HCT116 (cell line): ENCODE measurements at regions of chr3 and their contacts with region 1.

Region 1: GRCh38 chr3:40179016-40179415 is 130.5 kb upstream of the EIF1B start:
- DNase-seq: peak; percentile 54
- ATAC-seq: peak; percentile 86
- H3K4me3 ChIP-seq: no peak overlapping the region
- H3K27ac ChIP-seq: no peak overlapping the region
- H3K4me1 ChIP-seq: no peaks in the 10 kb centered on the region
- H3K27me3 ChIP-seq: no peaks in the 10 kb centered on the region; the same call in 1 of the 2 replicates
- CTCF ChIP-seq: peak; percentile 57 to 76 (median 73); a peak in 5 of 6 replicates
- POLR2A ChIP-seq: no peak
- RAD21 ChIP-seq: peak; percentile 82

Region 2: DNA sequence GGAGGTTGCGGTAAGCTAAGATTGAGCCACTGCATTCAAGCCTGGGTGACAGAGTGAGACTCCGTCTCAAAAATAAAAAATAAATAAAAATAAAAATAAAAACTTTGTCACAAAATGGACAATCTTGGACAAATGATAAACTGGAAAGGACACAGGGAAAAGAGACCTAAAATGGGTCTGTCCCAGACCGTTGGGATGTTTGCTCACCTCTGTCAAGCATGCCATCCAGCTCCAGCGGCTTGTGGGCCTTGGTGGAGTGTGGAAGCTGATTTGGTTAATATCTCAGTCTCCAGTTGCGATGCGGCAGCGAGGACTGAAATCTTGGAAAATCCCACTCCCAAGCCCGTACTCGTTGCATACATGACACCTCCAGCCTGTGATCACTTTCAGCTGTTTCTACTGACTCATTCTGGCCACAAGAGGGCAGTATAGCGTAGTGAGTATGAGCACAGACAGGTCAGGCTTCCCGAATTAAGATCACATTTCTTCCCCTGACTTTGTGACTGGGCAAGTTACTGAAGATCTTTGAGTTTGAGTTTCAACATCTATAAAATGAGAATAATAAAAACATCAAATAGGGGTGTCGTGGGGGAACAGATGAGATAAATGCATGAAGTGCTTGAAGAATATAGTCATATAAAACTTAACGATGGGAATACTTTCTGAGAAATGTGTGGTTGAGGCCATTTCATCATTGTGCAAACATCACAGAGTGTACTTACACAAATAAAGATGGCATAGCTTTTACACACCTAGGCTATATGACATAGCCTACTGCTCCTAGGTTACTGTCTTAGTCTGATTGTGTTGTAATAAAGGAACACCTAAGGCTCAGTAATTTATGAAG is 731.2 kb before region 1 on chr3:
- CTCF ChIA-PET with region 1: no interaction called
- POLR2A ChIA-PET with region 1: no interaction called
- RAD21 ChIA-PET with region 1: no interaction called
- intact Hi-C with region 1: loop called (anchors 5 kb)
- DNase-seq: peak; percentile 81
- ATAC-seq: peak; percentile 98
- H3K4me3 ChIP-seq: no peak overlapping the region
- H3K27ac ChIP-seq: no peak overlapping the region
- H3K4me1 ChIP-seq: 0 out of 4 replicates have a peak, but pooled peaks cover 0 to 2% of the 10 kb centered on the region in 2 experiments
- H3K27me3 ChIP-seq: no peaks in the 10 kb centered on the region
- CTCF ChIP-seq: peak; percentile 80 to 91 (median 86)
- POLR2A ChIP-seq: no peak
- RAD21 ChIP-seq: peak; percentile 83

Region 3: GRCh38 chr3:39541917-39542329 is 637.1 kb before region 1 on chr3:
- CTCF ChIA-PET with region 1: interaction called, 9 read pairs
- POLR2A ChIA-PET with region 1: no interaction called
- RAD21 ChIA-PET with region 1: no interaction called
- intact Hi-C with region 1: loop called (anchors 2 kb)
- DNase-seq: peak; percentile 13
- ATAC-seq: peak; percentile 66
- H3K4me3 ChIP-seq: no peak overlapping the region
- H3K27ac ChIP-seq: no peak overlapping the region
- H3K4me1 ChIP-seq: no peaks in the 10 kb centered on the region
- H3K27me3 ChIP-seq: no peaks in the 10 kb centered on the region
- CTCF ChIP-seq: peak; percentile 55 to 71 (median 62); a peak in 4 of 6 replicates
- POLR2A ChIP-seq: no peak
- RAD21 ChIP-seq: peak; percentile 78

Region 4: GRCh38 chr3:39668420-39668819 is 510.6 kb before region 1 on chr3:
- CTCF ChIA-PET with region 1: no interaction called
- POLR2A ChIA-PET with region 1: no interaction called
- RAD21 ChIA-PET with region 1: no interaction called
- intact Hi-C with region 1: loop called (anchors 2 kb)
- DNase-seq: peak; percentile 47
- ATAC-seq: peak; percentile 93
- H3K4me3 ChIP-seq: no peak overlapping the region
- H3K27ac ChIP-seq: no peak overlapping the region
- H3K4me1 ChIP-seq: no peaks in the 10 kb centered on the region
- H3K27me3 ChIP-seq: peaks cover 19% of the 10 kb centered on the region; the same call in 1 of the 2 replicates
- CTCF ChIP-seq: peak; percentile 44 to 80 (median 76); a peak in 5 of 6 replicates
- POLR2A ChIP-seq: no peak
- RAD21 ChIP-seq: peak; percentile 55

Region 5: DNA sequence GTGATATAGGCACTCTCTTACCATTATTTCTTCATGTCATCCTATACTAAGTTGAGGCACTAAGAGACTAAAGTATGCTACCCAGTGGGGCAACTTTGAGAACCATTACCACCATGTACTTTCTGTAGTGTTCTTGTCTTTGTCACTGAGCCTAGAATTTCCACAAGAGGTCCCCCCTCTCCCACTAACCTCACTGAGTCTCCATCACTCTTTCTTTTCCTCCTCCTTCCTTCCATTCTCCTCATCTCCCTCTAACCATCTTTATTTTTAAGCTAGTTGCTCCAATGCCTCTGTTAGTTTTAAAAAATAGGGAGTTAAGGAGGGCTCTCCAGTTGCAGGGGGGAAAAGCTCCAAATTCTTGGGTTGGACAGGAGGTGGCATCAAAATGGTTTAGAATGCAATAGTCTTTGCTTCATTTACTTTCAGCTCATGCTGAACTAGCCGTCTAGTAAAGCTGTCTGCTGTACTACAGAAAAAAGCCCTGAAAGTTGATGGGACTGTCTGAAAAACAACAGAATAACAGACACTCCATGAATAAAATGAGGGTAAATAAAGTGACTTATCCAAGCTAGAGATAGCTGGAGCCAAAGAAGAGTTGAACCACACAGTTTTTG is 454.7 kb before region 1 on chr3:
- CTCF ChIA-PET with region 1: interaction called, 5 read pairs
- POLR2A ChIA-PET with region 1: no interaction called
- RAD21 ChIA-PET with region 1: no interaction called
- intact Hi-C with region 1: loop called (anchors 1 kb)
- DNase-seq: no peak
- ATAC-seq: no peak
- H3K4me3 ChIP-seq: no peak overlapping the region
- H3K27ac ChIP-seq: no peak overlapping the region
- H3K4me1 ChIP-seq: no peaks in the 10 kb centered on the region
- H3K27me3 ChIP-seq: no peaks in the 10 kb centered on the region; the same call in 1 of the 2 replicates
- CTCF ChIP-seq: peak in 2 of 3 experiments; percentile 15 to 18; a peak in 1 of 6 replicates
- POLR2A ChIP-seq: no peak
- RAD21 ChIP-seq: peak; percentile 36; the same call in 1 of the 2 replicates

Region 6: GRCh38 chr3:39812537-39812936 is 366.5 kb before region 1 on chr3:
- CTCF ChIA-PET with region 1: interaction called, 15 read pairs
- POLR2A ChIA-PET with region 1: no interaction called
- RAD21 ChIA-PET with region 1: no interaction called
- intact Hi-C with region 1: loop called (anchors 5 kb)
- DNase-seq: no peak
- ATAC-seq: no peak
- H3K4me3 ChIP-seq: no peak overlapping the region
- H3K27ac ChIP-seq: no peak overlapping the region
- H3K4me1 ChIP-seq: peaks cover 7 to 8% of the 10 kb centered on the region in 2 experiments; a peak in 3 of 4 replicates
- H3K27me3 ChIP-seq: peaks cover 28% of the 10 kb centered on the region; the same call in 1 of the 2 replicates
- CTCF ChIP-seq: peak; percentile 20 to 64 (median 57); a peak in 5 of 6 replicates
- POLR2A ChIP-seq: no peak
- RAD21 ChIP-seq: peak; percentile 40; the same call in 1 of the 2 replicates